ENCODE measurements at regions of chr2 and their contacts with region 1.

Region 1: DNA sequence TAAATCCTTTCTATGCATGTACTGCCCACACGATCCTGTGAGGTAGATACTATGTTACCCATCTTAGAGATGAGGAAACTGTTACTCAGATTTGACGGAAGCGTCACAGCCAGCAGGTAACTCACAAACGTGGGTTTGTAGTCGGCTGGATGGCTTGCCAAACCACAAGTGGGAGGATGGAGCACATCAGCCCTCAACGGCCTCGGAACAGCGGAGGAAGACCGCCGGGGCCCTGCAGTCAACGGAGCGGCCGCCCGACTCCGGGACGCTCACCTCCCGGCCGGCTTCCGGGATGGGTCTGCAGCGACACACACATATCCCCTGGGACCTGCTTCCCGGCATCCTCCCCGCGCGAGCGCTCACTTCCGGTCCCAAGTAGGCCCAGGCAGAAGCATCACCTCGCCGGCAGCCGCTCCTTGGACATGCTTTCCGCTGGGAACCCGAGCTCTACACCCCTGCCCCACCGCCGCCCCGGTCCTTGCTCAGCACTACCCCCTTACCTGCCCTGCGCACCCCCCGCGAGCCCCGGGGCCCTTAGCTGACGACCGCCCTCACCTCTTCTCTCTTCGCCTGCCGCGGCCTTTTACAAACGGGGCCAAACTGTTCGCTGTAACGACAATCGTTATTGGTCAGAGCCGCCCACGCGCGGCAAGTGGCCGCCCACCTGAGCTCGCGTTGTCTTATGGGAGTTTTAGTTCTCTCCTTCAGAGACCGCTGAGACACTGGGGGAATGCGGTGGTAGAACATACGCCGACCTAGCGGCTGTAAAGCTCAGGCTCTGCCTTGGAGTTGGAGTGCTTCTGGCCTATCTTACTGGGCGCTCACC is at the start of gene C2orf42:
- DNase-seq: peak; percentile 94

Region 2: GRCh38 chr2:70248181-70248847 is 57.7 kb after region 1 on chr2 and contains the start of gene TIA1:
- CTCF ChIA-PET with region 1: no interaction called
- POLR2A ChIA-PET with region 1: interaction called, 10 read pairs
- DNase-seq: peak; percentile 97

Region 3: GRCh38 chr2:70270323-70270722 is 79.7 kb after region 1 on chr2:
- CTCF ChIA-PET with region 1: no interaction called
- POLR2A ChIA-PET with region 1: no interaction called
- DNase-seq: no peak